ENCODE measurements at regions of chr11 and their contacts with region 1.

Region 1: GRCh38 chr11:65003282-65003681 is 6.5 kb upstream of the BATF2 start:
- DNase-seq: no peak
- ATAC-seq: no peak
- H3K4me3 ChIP-seq: no peak overlapping the region
- H3K27ac ChIP-seq: no peak overlapping the region
- H3K4me1 ChIP-seq: peaks cover 15% of the 10 kb centered on the region
- H3K27me3 ChIP-seq: no peaks in the 10 kb centered on the region
- CTCF ChIP-seq: no peak
- POLR2A ChIP-seq: no peak

Region 2: GRCh38 chr11:64900263-64900678 is 103.0 kb before region 1 on chr11:
- intact Hi-C with region 1: loop called (anchors 10 kb)
- DNase-seq: peak in 2 of 4 donors; percentile 32 to 55
- ATAC-seq: peak; percentile 57
- H3K4me3 ChIP-seq: no peak overlapping the region
- H3K27ac ChIP-seq: peak overlapping the region in 2 of 4 donors; percentile 29 to 46
- H3K4me1 ChIP-seq: no peaks in the 10 kb centered on the region
- H3K27me3 ChIP-seq: no peaks in the 10 kb centered on the region
- CTCF ChIP-seq: no peak
- POLR2A ChIP-seq: peak in 1 of 3 donors; percentile 9

Region 3: GRCh38 chr11:65615229-65615941 is 612.1 kb after region 1 on chr11 and contains the start of gene PCNX3:
- intact Hi-C with region 1: no loop called
- DNase-seq: peak; percentile 100
- ATAC-seq: peak; percentile 85
- H3K4me3 ChIP-seq: peak within 1 kb of the TSS; percentile 86 to 87
- H3K27ac ChIP-seq: peak within 1 kb of the TSS; percentile 82 to 97 (median 92)
- H3K4me1 ChIP-seq: peaks cover 48% of the 10 kb centered on the region
- H3K27me3 ChIP-seq: no peaks in the 10 kb centered on the region
- CTCF ChIP-seq: peak in 1 of 7 experiments; percentile 28
- POLR2A ChIP-seq: peak in 2 of 3 donors; percentile 65 to 76
- total RNA-seq, gene PCNX3: 21.8 to 56.7 TPM